Activated CD8-positive, alpha-beta memory T cell treated with anti-CD3 and anti-CD28 coated beads, Interleukin-2, amount 10 ng/mL, durations not matched to agents 7 days and 5 days (primary cell): ENCODE measurements at regions of chr16 and their contacts with region 1.

Region 1: DNA sequence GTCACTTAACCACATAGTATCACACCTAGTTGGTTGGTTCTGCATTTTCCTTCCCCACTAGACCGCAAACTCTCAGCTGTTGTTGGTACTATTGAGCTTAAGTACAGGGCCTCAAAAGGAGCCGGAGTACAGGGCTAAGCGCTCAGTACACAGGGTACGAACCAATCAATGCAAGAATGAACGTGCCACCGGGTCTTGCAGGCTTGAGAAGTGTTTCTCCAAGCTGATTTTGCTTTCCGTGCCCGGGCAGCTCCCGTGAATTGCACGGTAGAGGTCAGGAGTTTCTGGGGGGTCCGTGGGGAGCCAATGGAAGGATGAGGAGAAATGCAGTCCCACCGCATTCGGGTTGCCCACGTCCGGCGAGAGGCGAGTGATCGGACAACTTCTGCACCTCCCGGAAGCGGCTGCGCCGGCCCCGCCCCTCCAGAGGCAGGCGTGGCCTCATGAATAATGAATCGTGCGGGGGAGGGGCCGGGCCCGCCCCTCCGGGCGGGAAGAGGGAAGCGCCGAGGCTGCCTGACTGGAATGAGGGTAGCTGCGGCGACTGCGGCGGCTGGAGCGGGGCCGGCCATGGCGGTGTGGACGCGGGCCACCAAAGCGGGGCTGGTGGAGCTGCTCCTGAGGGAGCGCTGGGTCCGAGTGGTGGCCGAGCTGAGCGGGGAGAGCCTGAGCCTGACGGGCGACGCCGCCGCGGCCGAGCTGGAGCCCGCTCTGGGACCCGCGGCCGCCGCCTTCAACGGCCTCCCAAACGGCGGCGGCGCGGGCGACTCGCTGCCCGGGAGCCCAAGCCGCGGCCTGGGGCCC is at the start of gene SNTB2:
- DNase-seq: peak; percentile 92
- ATAC-seq: peak; percentile 86
- H3K4me3 Mint-ChIP-seq: peak within 1 kb of the TSS; percentile 91
- H3K27ac Mint-ChIP-seq: peak within 1 kb of the TSS; percentile 99
- H3K4me1 Mint-ChIP-seq: peaks cover 51% of the 10 kb centered on the region
- H3K27me3 Mint-ChIP-seq: no peaks in the 10 kb centered on the region
- total RNA-seq, gene SNTB2: 21.5 to 30.6 TPM

Region 2: DNA sequence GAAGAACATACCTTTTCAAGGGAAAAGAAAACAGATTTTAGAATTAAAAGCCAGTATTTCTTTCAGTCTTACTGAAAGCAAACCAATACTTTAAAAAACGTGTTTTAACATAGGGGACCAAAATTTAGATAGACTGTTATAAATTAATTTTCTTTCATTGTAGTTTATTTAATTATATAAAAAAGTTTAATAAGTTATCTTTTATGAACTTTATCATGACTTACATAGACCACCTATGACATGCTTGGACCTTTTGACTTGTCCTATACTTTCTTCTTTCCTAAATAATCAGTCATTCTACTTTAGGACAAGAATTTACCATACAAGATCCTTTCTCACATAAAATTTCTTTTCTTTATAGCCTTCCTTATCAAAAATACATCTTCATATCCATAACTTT is 183.3 kb before region 1 on chr16:
- CTCF ChIA-PET with region 1: no interaction called
- DNase-seq: no peak
- ATAC-seq: no peak
- H3K4me3 Mint-ChIP-seq: no peak overlapping the region
- H3K27ac Mint-ChIP-seq: no peak overlapping the region
- H3K4me1 Mint-ChIP-seq: no peaks in the 10 kb centered on the region
- H3K27me3 Mint-ChIP-seq: no peaks in the 10 kb centered on the region

Region 3: GRCh38 chr16:69166221-69166833 is 20.5 kb before region 1 on chr16:
- CTCF ChIA-PET with region 1: interaction called, 18 read pairs
- DNase-seq: peak; percentile 72
- ATAC-seq: peak; percentile 86
- H3K4me3 Mint-ChIP-seq: no peak overlapping the region
- H3K27ac Mint-ChIP-seq: peak overlapping the region; percentile 77
- H3K4me1 Mint-ChIP-seq: peaks cover 31% of the 10 kb centered on the region
- H3K27me3 Mint-ChIP-seq: no peaks in the 10 kb centered on the region

Region 4: GRCh38 chr16:69204172-69204571 is 17.3 kb after region 1 on chr16:
- CTCF ChIA-PET with region 1: no interaction called
- DNase-seq: no peak
- ATAC-seq: no peak
- H3K4me3 Mint-ChIP-seq: no peak overlapping the region
- H3K27ac Mint-ChIP-seq: peak overlapping the region; percentile 49
- H3K4me1 Mint-ChIP-seq: peaks cover 14% of the 10 kb centered on the region
- H3K27me3 Mint-ChIP-seq: no peaks in the 10 kb centered on the region

Region 5: GRCh38 chr16:69286941-69287713 is 100.3 kb after region 1 on chr16:
- CTCF ChIA-PET with region 1: interaction called, 11 read pairs
- DNase-seq: peak; percentile 46
- ATAC-seq: no peak
- H3K4me3 Mint-ChIP-seq: no peak overlapping the region
- H3K27ac Mint-ChIP-seq: no peak overlapping the region
- H3K4me1 Mint-ChIP-seq: peaks cover 2% of the 10 kb centered on the region
- H3K27me3 Mint-ChIP-seq: no peaks in the 10 kb centered on the region

Region 6: GRCh38 chr16:69310653-69311532 is 124.0 kb after region 1 on chr16 and contains the start of gene VPS4A:
- CTCF ChIA-PET with region 1: no interaction called
- DNase-seq: peak; percentile 97
- ATAC-seq: peak; percentile 95
- H3K4me3 Mint-ChIP-seq: peak within 1 kb of the TSS; percentile 95
- H3K27ac Mint-ChIP-seq: peak within 1 kb of the TSS; percentile 92
- H3K4me1 Mint-ChIP-seq: peaks cover 22% of the 10 kb centered on the region
- H3K27me3 Mint-ChIP-seq: no peaks in the 10 kb centered on the region
- total RNA-seq, gene VPS4A: 31.5 to 38.9 TPM

Region 7: DNA sequence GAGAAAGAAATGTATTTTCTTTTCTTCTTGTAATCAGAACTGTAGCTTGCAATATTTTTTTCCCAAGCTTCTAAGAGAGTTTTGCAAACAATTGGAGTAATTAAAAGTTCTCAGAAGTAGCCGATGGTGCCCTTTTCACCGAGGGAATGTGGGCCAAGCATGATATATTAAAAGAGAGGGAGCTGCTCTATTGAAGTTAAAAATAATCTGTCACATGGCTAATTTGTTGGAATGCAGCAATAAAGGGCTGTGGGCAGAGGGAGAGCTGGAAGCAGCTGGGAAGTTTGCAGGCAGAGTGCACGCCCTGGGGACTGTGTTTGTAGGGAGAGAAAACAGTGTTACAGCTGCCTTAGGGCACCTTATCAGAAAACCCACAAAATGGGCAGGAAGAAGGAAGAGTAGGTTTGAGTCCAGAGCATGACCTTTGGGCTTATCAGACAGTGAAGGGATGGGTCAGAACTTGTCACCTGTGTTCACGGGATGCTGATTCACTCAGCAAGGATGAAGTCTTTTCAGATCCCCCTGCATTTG is 217.5 kb after region 1 on chr16:
- CTCF ChIA-PET with region 1: no interaction called
- DNase-seq: no peak
- ATAC-seq: no peak
- H3K4me3 Mint-ChIP-seq: no peak overlapping the region
- H3K27ac Mint-ChIP-seq: no peak overlapping the region
- H3K4me1 Mint-ChIP-seq: peaks cover 9% of the 10 kb centered on the region
- H3K27me3 Mint-ChIP-seq: no peaks in the 10 kb centered on the region